ENCODE measurements at regions of chr9 and their contacts with region 1.

Region 1: DNA sequence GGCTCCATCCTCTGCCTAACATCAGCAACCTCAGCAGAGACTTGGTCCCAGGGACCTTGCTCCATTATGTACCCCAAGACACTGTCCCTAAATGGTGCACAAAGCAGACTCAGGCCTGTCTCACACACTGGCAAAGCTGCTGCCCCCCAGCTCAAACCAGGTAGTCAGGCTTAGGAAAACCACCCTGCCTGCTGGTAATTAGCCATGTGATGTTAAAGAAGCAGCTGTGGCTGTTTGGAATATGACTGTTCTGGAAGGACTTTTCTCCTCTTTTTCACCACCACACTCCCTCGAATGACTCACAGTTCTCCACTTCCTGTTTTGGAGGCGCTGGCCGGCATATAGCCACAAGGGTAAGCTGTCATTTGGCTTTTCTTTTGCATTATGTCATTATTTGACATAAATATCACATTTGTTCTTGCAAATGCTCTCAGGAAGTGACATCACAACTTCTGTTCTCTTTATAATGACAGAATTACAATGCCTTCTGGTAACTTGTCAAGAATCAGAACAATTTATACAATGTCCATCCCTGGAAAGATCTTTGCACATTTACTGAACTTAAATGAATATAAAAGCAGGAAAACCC is 113.9 kb downstream of the SUSD1 start:
- DNase-seq: peak; percentile 57
- ATAC-seq: peak; percentile 68
- H3K4me3 ChIP-seq: no peak overlapping the region
- H3K4me3 Mint-ChIP-seq: no peak overlapping the region
- H3K27ac ChIP-seq: peak overlapping the region in 1 of 2 donors; percentile 0
- H3K27ac Mint-ChIP-seq: peak overlapping the region; percentile 82
- H3K4me1 ChIP-seq: peaks cover 25 to 51% of the 10 kb centered on the region in 2 donors
- H3K4me1 Mint-ChIP-seq: peaks cover 78% of the 10 kb centered on the region
- H3K27me3 ChIP-seq: no peaks in the 10 kb centered on the region
- H3K27me3 Mint-ChIP-seq: no peaks in the 10 kb centered on the region
- CTCF ChIP-seq: no peak

Region 2: GRCh38 chr9:111805830-111806241 is 255.4 kb before region 1 on chr9:
- CTCF ChIA-PET with region 1: no interaction called
- POLR2A ChIA-PET with region 1: no interaction called
- intact Hi-C with region 1: no loop called
- DNase-seq: no peak
- ATAC-seq: no peak
- H3K4me3 ChIP-seq: no peak overlapping the region
- H3K4me3 Mint-ChIP-seq: no peak overlapping the region
- H3K27ac ChIP-seq: no peak overlapping the region
- H3K27ac Mint-ChIP-seq: no peak overlapping the region
- H3K4me1 ChIP-seq: no peaks in the 10 kb centered on the region
- H3K4me1 Mint-ChIP-seq: peaks cover 6% of the 10 kb centered on the region
- H3K27me3 ChIP-seq: no peaks in the 10 kb centered on the region
- H3K27me3 Mint-ChIP-seq: no peaks in the 10 kb centered on the region
- CTCF ChIP-seq: no peak

Region 3: GRCh38 chr9:112012026-112012902 is 49.0 kb before region 1 on chr9:
- CTCF ChIA-PET with region 1: no interaction called
- POLR2A ChIA-PET with region 1: interaction called, 3 read pairs
- intact Hi-C with region 1: loop called (anchors 10 kb)
- DNase-seq: peak; percentile 62
- ATAC-seq: peak; percentile 82
- H3K4me3 ChIP-seq: peak overlapping the region in 1 of 5 experiments; percentile 22
- H3K4me3 Mint-ChIP-seq: peak overlapping the region; percentile 57
- H3K27ac ChIP-seq: peak overlapping the region; percentile 56 to 74
- H3K27ac Mint-ChIP-seq: peak overlapping the region; percentile 88
- H3K4me1 ChIP-seq: peaks cover 44% of the 10 kb centered on the region in 2 donors
- H3K4me1 Mint-ChIP-seq: peaks cover 65% of the 10 kb centered on the region
- H3K27me3 ChIP-seq: no peaks in the 10 kb centered on the region
- H3K27me3 Mint-ChIP-seq: no peaks in the 10 kb centered on the region
- CTCF ChIP-seq: no peak

Region 4: GRCh38 chr9:112028280-112029221 is 32.7 kb before region 1 on chr9:
- CTCF ChIA-PET with region 1: no interaction called
- POLR2A ChIA-PET with region 1: no interaction called
- intact Hi-C with region 1: loop called (anchors 2 kb)
- DNase-seq: peak; percentile 56
- ATAC-seq: peak; percentile 53
- H3K4me3 ChIP-seq: no peak overlapping the region
- H3K4me3 Mint-ChIP-seq: peak overlapping the region; percentile 67
- H3K27ac ChIP-seq: peak overlapping the region in 1 of 2 donors; percentile 87
- H3K27ac Mint-ChIP-seq: peak overlapping the region; percentile 89
- H3K4me1 ChIP-seq: peaks cover 55% of the 10 kb centered on the region in 2 donors
- H3K4me1 Mint-ChIP-seq: peaks cover 55% of the 10 kb centered on the region
- H3K27me3 ChIP-seq: no peaks in the 10 kb centered on the region
- H3K27me3 Mint-ChIP-seq: no peaks in the 10 kb centered on the region
- CTCF ChIP-seq: no peak

Region 5: GRCh38 chr9:112086627-112087026 is 25.4 kb after region 1 on chr9:
- CTCF ChIA-PET with region 1: no interaction called
- POLR2A ChIA-PET with region 1: no interaction called
- intact Hi-C with region 1: loop called (anchors 1 kb)
- DNase-seq: peak; percentile 36
- ATAC-seq: no peak
- H3K4me3 ChIP-seq: no peak overlapping the region
- H3K4me3 Mint-ChIP-seq: no peak overlapping the region
- H3K27ac ChIP-seq: no peak overlapping the region
- H3K27ac Mint-ChIP-seq: no peak overlapping the region
- H3K4me1 ChIP-seq: no peaks in the 10 kb centered on the region
- H3K4me1 Mint-ChIP-seq: no peaks in the 10 kb centered on the region
- H3K27me3 ChIP-seq: no peaks in the 10 kb centered on the region
- H3K27me3 Mint-ChIP-seq: no peaks in the 10 kb centered on the region
- CTCF ChIP-seq: peak; percentile 68